ENCODE measurements at regions of chr12 and their contacts with region 1.

Region 1: DNA sequence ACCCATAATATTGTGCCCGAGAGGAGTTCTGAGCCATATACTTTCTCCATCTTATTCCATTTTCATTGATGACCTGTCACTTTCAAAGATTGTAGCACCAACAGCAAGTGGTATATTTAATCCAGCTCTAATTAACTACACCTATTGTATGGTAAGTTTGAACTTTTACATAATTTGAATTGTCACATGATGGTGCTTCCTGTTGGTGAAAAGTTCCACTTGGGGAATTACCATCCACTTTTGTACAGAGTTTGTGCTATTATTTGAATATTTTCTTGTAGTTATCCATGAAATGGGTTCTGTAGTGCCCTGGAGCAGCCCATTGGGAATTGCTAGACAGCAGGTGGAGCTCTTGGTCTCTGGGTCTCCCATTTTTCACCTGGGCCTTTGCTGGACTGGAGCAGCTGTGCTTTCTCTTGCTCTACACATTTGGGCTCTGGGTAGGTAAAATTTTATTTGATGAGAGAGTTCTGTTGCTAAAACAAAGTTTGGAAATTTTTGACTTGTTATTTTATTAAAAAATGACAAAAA is 3.0 kb downstream of the SMCO3 start:
- DNase-seq: peak in 1 of 2 experiments; percentile 63
- H3K4me3 ChIP-seq: no peak overlapping the region
- H3K27ac ChIP-seq: no peak overlapping the region
- H3K4me1 ChIP-seq: no peaks in the 10 kb centered on the region
- H3K27me3 ChIP-seq: no peaks in the 10 kb centered on the region
- CTCF ChIP-seq: peak; percentile 66

Region 2: GRCh38 chr12:14795028-14795448 is 16.0 kb before region 1 on chr12:
- CTCF ChIA-PET with region 1: no interaction called
- POLR2A ChIA-PET with region 1: interaction called, 14 read pairs
- intact Hi-C with region 1: no loop called
- DNase-seq: no peak
- H3K4me3 ChIP-seq: no peak overlapping the region
- H3K27ac ChIP-seq: no peak overlapping the region
- H3K4me1 ChIP-seq: no peaks in the 10 kb centered on the region
- H3K27me3 ChIP-seq: no peaks in the 10 kb centered on the region
- CTCF ChIP-seq: no peak

Region 3: GRCh38 chr12:14928969-14929368 is 118.0 kb after region 1 on chr12:
- CTCF ChIA-PET with region 1: no interaction called
- POLR2A ChIA-PET with region 1: interaction called, 3 read pairs
- intact Hi-C with region 1: loop called (anchors 1 kb)
- DNase-seq: peak; percentile 84 to 97
- H3K4me3 ChIP-seq: peak overlapping the region; percentile 50
- H3K27ac ChIP-seq: peak overlapping the region; percentile 78
- H3K4me1 ChIP-seq: peaks cover 72% of the 10 kb centered on the region
- H3K27me3 ChIP-seq: no peaks in the 10 kb centered on the region
- CTCF ChIP-seq: no peak

Region 4: GRCh38 chr12:15220994-15221885 is 410.2 kb after region 1 on chr12 and contains the start of gene RERG:
- CTCF ChIA-PET with region 1: interaction called, 10 read pairs
- POLR2A ChIA-PET with region 1: no interaction called
- intact Hi-C with region 1: loop called (anchors 10 kb)
- DNase-seq: peak; percentile 44 to 87
- H3K4me3 ChIP-seq: peak within 1 kb of the TSS; percentile 41; the same call in 1 of the 2 replicates
- H3K27ac ChIP-seq: no peak within 1 kb of the TSS
- H3K4me1 ChIP-seq: 0 out of 2 replicates have a peak, but pooled peaks cover 6% of the 10 kb centered on the region
- H3K27me3 ChIP-seq: no peaks in the 10 kb centered on the region
- CTCF ChIP-seq: peak; percentile 85
- total RNA-seq, gene RERG: 0.50 and 1.4 TPM in 2 replicates

Region 5: DNA sequence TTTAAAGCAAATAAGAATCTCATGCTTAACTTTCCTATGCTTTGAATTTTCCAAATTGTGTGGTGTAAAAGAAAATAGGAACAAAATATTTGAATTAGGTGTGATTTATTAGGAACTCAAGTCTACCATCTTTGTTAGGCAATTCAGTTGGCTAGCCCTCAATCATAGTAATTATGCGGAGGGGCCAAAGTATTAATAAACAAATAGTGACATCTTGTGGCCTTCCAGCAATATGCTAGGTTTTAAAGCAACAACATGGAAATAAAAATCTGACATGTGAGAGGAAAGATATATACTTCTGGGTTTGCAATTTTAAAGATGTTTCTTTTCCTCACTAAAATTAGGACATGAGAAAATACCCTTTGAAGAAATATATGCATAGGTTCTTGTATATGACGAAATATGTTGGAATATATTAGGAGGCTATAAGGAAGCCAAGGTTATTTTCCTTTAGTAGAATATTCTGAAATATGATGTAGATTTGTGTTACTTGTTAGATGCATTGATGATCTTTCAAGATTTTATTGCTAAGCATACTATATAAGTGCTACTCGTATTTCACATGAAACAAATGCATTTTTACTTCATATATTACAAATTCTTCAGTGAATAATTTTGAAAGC is 711.7 kb after region 1 on chr12:
- CTCF ChIA-PET with region 1: no interaction called
- POLR2A ChIA-PET with region 1: no interaction called
- intact Hi-C with region 1: loop called (anchors 2 kb)
- DNase-seq: peak in 1 of 2 experiments; percentile 56
- H3K4me3 ChIP-seq: no peak overlapping the region
- H3K27ac ChIP-seq: no peak overlapping the region
- H3K4me1 ChIP-seq: 0 out of 2 replicates have a peak, but pooled peaks cover 5% of the 10 kb centered on the region
- H3K27me3 ChIP-seq: no peaks in the 10 kb centered on the region
- CTCF ChIP-seq: peak; percentile 76

Region 6: GRCh38 chr12:15534322-15534721 is 723.3 kb after region 1 on chr12:
- CTCF ChIA-PET with region 1: no interaction called
- POLR2A ChIA-PET with region 1: no interaction called
- intact Hi-C with region 1: no loop called
- DNase-seq: no peak
- H3K4me3 ChIP-seq: no peak overlapping the region
- H3K27ac ChIP-seq: no peak overlapping the region
- H3K4me1 ChIP-seq: no peaks in the 10 kb centered on the region
- H3K27me3 ChIP-seq: no peaks in the 10 kb centered on the region
- CTCF ChIP-seq: no peak

Measured in PC-9 (cell line).